ENCODE measurements at regions of chr18 and their contacts with region 1.

Region 1: GRCh38 chr18:59459369-59460079 is 100.5 kb upstream of the LMAN1 start:
- DNase-seq: no peak
- H3K4me3 ChIP-seq: no peak overlapping the region
- H3K4me3 Mint-ChIP-seq: no peak overlapping the region
- H3K27ac ChIP-seq: no peak overlapping the region
- H3K27ac Mint-ChIP-seq: no peak overlapping the region
- H3K4me1 ChIP-seq: no peaks in the 10 kb centered on the region
- H3K4me1 Mint-ChIP-seq: no peaks in the 10 kb centered on the region
- H3K27me3 ChIP-seq: no peaks in the 10 kb centered on the region
- H3K27me3 Mint-ChIP-seq: peaks cover 4 to 8% of the 10 kb centered on the region in 2 donors

Region 2: DNA sequence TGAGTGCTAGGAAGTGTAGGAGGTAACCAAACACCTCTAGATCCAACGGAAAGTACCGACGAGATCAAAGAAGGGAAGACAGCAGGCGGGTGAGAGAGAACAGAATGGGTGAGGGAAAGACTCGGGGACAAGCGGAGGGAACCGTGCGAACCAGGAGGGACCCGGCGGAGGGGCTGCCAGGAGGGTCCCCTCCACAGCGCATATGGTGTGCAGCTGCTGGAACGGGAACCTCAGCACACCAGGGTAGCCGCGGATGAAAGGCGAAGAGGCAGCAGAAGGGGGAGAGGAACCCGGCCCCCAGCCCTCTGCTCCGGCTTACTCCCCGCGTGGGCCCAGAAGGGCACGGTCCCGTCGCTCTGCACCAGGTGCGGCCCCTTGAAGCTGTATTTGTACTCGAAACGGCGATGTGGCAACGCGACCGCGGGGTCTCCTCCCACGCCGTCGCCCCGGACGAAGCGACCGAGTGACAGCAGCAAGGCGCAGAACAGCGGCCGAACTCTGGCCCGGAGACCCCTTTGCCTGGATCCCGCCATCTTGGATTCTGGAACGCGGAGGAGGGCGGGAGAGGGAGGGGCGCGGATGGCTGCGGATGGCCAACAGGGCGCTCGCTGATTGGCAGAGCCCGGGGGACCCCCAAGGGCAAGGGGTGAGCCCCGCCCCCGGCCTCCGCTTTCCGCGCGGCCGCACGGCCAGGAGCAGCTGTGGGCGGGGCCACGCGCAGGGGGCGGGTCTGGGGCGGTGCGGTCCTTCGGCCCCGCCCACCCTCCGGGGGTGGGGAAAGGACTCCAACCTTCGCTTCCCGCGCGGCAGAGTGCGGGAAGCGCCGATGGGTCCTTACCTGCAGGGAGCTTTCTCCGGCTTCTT is 100.6 kb before region 1 on chr18 and contains the start of gene LMAN1:
- CTCF ChIA-PET with region 1: no interaction called
- POLR2A ChIA-PET with region 1: no interaction called
- intact Hi-C with region 1: no loop called
- DNase-seq: peak; percentile 85 to 88 (median 87)
- H3K4me3 ChIP-seq: peak within 1 kb of the TSS; percentile 76 to 92
- H3K4me3 Mint-ChIP-seq: peak within 1 kb of the TSS; percentile 91 to 100 (median 98)
- H3K27ac ChIP-seq: peak within 1 kb of the TSS; percentile 95
- H3K27ac Mint-ChIP-seq: peak within 1 kb of the TSS; percentile 91 to 99 (median 97)
- H3K4me1 ChIP-seq: peaks cover 38% of the 10 kb centered on the region
- H3K4me1 Mint-ChIP-seq: peaks cover 23 to 52% (median 35%) of the 10 kb centered on the region in 4 donors
- H3K27me3 ChIP-seq: no peaks in the 10 kb centered on the region
- H3K27me3 Mint-ChIP-seq: peaks cover 0 to 2% of the 10 kb centered on the region in 2 donors
- total RNA-seq, gene LMAN1: 55.7 to 59.6 TPM

Region 3: DNA sequence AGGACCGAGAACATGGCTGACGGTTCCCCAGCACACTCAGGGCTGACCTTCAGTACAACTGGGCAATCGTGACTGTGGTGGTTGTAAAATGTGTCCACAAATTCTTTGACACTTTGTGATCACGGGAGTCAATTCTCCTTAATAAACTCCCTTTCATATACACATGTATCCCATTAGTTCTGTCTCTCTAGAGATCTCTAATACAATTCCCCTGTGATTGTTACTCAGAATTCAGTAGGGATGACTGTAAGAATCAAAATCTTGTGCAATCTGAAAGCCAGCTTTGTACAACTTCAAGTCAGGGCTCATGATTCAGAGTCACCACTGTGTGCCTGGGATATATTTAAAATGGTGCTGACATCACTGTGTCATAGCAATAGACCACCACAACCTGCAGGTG is 11.0 kb before region 1 on chr18:
- CTCF ChIA-PET with region 1: interaction called, 15 read pairs
- POLR2A ChIA-PET with region 1: no interaction called
- intact Hi-C with region 1: no loop called
- DNase-seq: no peak
- H3K4me3 ChIP-seq: no peak overlapping the region
- H3K4me3 Mint-ChIP-seq: no peak overlapping the region
- H3K27ac ChIP-seq: no peak overlapping the region
- H3K27ac Mint-ChIP-seq: no peak overlapping the region
- H3K4me1 ChIP-seq: no peaks in the 10 kb centered on the region
- H3K4me1 Mint-ChIP-seq: no peaks in the 10 kb centered on the region
- H3K27me3 ChIP-seq: no peaks in the 10 kb centered on the region
- H3K27me3 Mint-ChIP-seq: peaks cover 2 to 8% of the 10 kb centered on the region in 2 donors

Region 4: GRCh38 chr18:59509481-59510442 is 50.2 kb after region 1 on chr18:
- CTCF ChIA-PET with region 1: no interaction called
- POLR2A ChIA-PET with region 1: no interaction called
- intact Hi-C with region 1: no loop called
- DNase-seq: no peak
- H3K4me3 ChIP-seq: no peak overlapping the region
- H3K4me3 Mint-ChIP-seq: no peak overlapping the region
- H3K27ac ChIP-seq: no peak overlapping the region
- H3K27ac Mint-ChIP-seq: no peak overlapping the region
- H3K4me1 ChIP-seq: no peaks in the 10 kb centered on the region
- H3K4me1 Mint-ChIP-seq: no peaks in the 10 kb centered on the region
- H3K27me3 ChIP-seq: no peaks in the 10 kb centered on the region
- H3K27me3 Mint-ChIP-seq: peaks cover 5 to 10% of the 10 kb centered on the region in 2 donors

Region 5: DNA sequence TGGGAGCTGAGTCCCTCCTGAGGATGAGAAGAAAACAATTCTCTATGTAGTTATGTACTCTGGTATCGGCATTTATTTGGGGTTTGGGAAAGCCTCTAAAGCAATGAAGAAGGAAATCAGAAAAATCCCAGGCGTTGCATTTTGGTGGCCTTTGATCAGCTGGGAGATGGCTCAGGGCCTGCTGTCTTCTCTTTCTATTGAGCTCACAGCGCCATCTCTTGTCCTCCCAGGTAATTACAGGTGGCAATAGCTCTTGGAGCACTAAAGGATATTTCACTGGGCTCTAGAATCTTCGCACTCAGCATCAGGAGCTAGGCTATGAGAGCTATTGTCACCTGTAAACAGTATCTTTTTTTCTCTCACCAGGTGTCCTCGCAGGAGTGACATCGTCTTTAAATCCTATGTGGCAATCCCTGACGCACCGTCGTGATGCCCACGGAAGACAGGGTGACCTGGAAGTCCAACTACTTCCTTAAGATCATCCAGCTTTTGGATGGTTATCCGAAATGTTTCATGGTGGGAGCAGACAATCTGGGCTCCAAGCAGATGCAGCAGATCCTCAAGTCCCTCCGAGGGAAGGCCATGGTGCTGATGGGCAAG is 364.2 kb after region 1 on chr18:
- CTCF ChIA-PET with region 1: interaction called, 12 read pairs
- POLR2A ChIA-PET with region 1: no interaction called
- intact Hi-C with region 1: no loop called
- DNase-seq: no peak
- H3K4me3 ChIP-seq: no peak overlapping the region
- H3K4me3 Mint-ChIP-seq: no peak overlapping the region
- H3K27ac ChIP-seq: no peak overlapping the region
- H3K27ac Mint-ChIP-seq: no peak overlapping the region
- H3K4me1 ChIP-seq: no peaks in the 10 kb centered on the region
- H3K4me1 Mint-ChIP-seq: peaks cover 0 to 1% (median 0%) of the 10 kb centered on the region in 4 donors
- H3K27me3 ChIP-seq: no peaks in the 10 kb centered on the region
- H3K27me3 Mint-ChIP-seq: peaks cover 5 to 10% of the 10 kb centered on the region in 2 donors